ENCODE measurements at regions of chr13 and their contacts with region 1.

Region 1: GRCh38 chr13:75694722-75695121 is 58.6 kb downstream of the LMO7 start:
- DNase-seq: no peak
- H3K4me3 ChIP-seq: no peak overlapping the region
- H3K4me3 Mint-ChIP-seq: peak overlapping the region; percentile 2
- H3K27ac Mint-ChIP-seq: no peak overlapping the region
- H3K4me1 ChIP-seq: peaks cover 21% of the 10 kb centered on the region
- H3K4me1 Mint-ChIP-seq: peaks cover 21% of the 10 kb centered on the region
- H3K27me3 ChIP-seq: no peaks in the 10 kb centered on the region
- H3K27me3 Mint-ChIP-seq: no peaks in the 10 kb centered on the region
- CTCF ChIP-seq: no peak

Region 2: GRCh38 chr13:75798353-75799255 is 103.9 kb after region 1 on chr13:
- CTCF ChIA-PET with region 1: interaction called, 18 read pairs
- POLR2A ChIA-PET with region 1: no interaction called
- intact Hi-C with region 1: loop called (anchors 1 kb)
- DNase-seq: no peak
- H3K4me3 ChIP-seq: no peak overlapping the region
- H3K4me3 Mint-ChIP-seq: no peak overlapping the region
- H3K27ac Mint-ChIP-seq: no peak overlapping the region
- H3K4me1 ChIP-seq: peaks cover 30% of the 10 kb centered on the region
- H3K4me1 Mint-ChIP-seq: peaks cover 37% of the 10 kb centered on the region
- H3K27me3 ChIP-seq: no peaks in the 10 kb centered on the region
- H3K27me3 Mint-ChIP-seq: no peaks in the 10 kb centered on the region
- CTCF ChIP-seq: no peak

Region 3: GRCh38 chr13:75870397-75870903 is 175.7 kb after region 1 on chr13:
- CTCF ChIA-PET with region 1: interaction called, 5 read pairs
- POLR2A ChIA-PET with region 1: no interaction called
- intact Hi-C with region 1: loop called (anchors 2 kb)
- DNase-seq: peak in 1 of 2 experiments; percentile 46
- H3K4me3 ChIP-seq: no peak overlapping the region
- H3K4me3 Mint-ChIP-seq: peak overlapping the region; percentile 36
- H3K27ac Mint-ChIP-seq: no peak overlapping the region
- H3K4me1 ChIP-seq: no peaks in the 10 kb centered on the region
- H3K4me1 Mint-ChIP-seq: peaks cover 13% of the 10 kb centered on the region
- H3K27me3 ChIP-seq: no peaks in the 10 kb centered on the region
- H3K27me3 Mint-ChIP-seq: no peaks in the 10 kb centered on the region
- CTCF ChIP-seq: peak; percentile 71 to 85